ENCODE measurements at regions of chr1 and their contacts with region 1.

Region 1: GRCh38 chr1:36624466-36624865 is 141.8 kb upstream of the CSF3R start:
- DNase-seq: no peak
- ATAC-seq: no peak
- H3K4me3 ChIP-seq: no peak overlapping the region
- H3K27ac ChIP-seq: no peak overlapping the region
- H3K4me1 ChIP-seq: no peaks in the 10 kb centered on the region; a peak in 1 of 5 replicates
- H3K27me3 ChIP-seq: peaks cover 16 to 46% of the 10 kb centered on the region in 2 experiments; a peak in 4 of 5 replicates
- CTCF ChIP-seq: no peak
- EP300 ChIP-seq: no peak
- POLR2A ChIP-seq: no peak
- RAD21 ChIP-seq: no peak

Region 2: DNA sequence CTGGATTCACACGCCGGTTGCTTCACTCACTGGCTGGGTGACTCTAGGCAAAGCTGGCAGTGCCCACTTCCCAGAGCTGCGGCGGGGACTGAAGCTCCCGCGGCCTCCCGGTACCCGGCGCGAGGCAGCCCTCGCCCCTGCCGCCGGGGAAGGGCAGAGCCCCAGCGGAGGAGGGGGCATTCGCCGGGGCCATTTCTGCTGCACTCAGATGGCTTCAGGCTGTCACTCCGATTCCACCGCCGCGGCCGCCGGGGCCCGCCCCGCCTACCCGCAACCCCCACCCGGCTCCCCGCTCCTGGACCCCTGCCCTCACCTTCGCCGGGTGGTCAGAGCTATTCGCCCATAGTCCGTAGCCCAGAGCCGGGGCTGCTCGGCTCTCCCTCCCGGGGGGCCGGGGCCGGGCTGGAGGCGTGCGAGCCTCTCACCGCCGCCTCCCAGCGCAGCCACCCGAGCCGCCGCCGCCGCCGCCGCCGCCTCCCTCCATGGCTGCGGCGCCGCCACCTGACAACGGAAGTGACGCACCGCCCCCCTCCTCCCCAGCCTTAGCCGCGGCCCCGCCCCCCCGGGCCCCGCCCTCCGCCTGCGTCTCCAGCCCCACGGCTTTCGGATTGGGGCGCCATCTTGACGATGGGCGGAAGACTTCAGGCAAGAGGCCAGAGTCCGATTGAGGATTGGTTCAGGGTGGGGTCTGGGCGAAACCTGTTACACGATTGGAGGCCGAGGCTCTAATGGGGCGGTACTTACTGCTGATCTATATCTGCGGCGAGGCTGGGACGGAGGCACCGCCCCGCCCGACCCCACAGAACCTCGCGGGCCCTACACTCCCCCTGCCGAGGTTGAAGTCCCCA is 238.8 kb before region 1 on chr1 and contains the start of gene STK40:
- CTCF ChIA-PET with region 1: no interaction called
- POLR2A ChIA-PET with region 1: no interaction called
- in situ Hi-C with region 1: no loop called
- intact Hi-C with region 1: no loop called
- DNase-seq: peak; percentile 97 to 100 (median 98)
- ATAC-seq: peak; percentile 88
- H3K4me3 ChIP-seq: peak within 1 kb of the TSS; percentile 91
- H3K27ac ChIP-seq: peak within 1 kb of the TSS; percentile 99
- H3K4me1 ChIP-seq: peaks cover 29 to 33% of the 10 kb centered on the region in 2 experiments
- H3K27me3 ChIP-seq: no peaks in the 10 kb centered on the region
- CTCF ChIP-seq: no peak; a peak in 1 of 6 replicates
- EP300 ChIP-seq: no peak
- POLR2A ChIP-seq: no peak
- RAD21 ChIP-seq: no peak
- polyA plus RNA-seq, gene STK40: 0.69 to 1.7 TPM

Region 3: GRCh38 chr1:36636206-36636605 is 11.7 kb after region 1 on chr1:
- CTCF ChIA-PET with region 1: no interaction called
- POLR2A ChIA-PET with region 1: interaction called, 11 read pairs
- in situ Hi-C with region 1: no loop called
- intact Hi-C with region 1: no loop called
- DNase-seq: no peak
- ATAC-seq: no peak
- H3K4me3 ChIP-seq: no peak overlapping the region
- H3K27ac ChIP-seq: no peak overlapping the region
- H3K4me1 ChIP-seq: no peaks in the 10 kb centered on the region
- H3K27me3 ChIP-seq: peaks cover 9 to 45% of the 10 kb centered on the region in 2 experiments; a peak in 4 of 5 replicates
- CTCF ChIP-seq: no peak
- EP300 ChIP-seq: no peak
- POLR2A ChIP-seq: no peak
- RAD21 ChIP-seq: no peak

Region 4: DNA sequence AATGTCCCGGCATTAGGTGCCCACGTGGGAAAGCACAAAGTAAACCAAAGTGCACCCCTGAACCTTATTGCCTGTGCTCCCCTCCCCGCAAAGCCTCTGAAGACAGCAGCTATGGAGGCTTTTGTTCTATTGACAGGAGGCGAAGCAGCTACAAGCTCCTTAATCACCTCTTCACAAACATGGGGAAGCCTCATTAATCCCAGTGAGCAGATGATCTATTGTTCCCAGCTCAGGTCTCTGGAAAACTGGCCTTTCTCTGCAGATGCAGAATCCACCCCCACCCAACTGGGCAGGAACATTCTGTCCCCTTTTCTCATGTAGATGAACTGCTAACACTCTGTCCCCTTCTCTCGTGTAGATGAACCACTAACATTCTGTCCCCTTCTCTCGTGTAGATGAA is 48.7 kb after region 1 on chr1:
- CTCF ChIA-PET with region 1: no interaction called
- POLR2A ChIA-PET with region 1: no interaction called
- in situ Hi-C with region 1: no loop called
- intact Hi-C with region 1: no loop called
- DNase-seq: no peak
- ATAC-seq: no peak
- H3K4me3 ChIP-seq: no peak overlapping the region
- H3K27ac ChIP-seq: no peak overlapping the region
- H3K4me1 ChIP-seq: no peaks in the 10 kb centered on the region
- H3K27me3 ChIP-seq: peaks cover 13 to 42% of the 10 kb centered on the region in 2 experiments; a peak in 3 of 5 replicates
- CTCF ChIP-seq: no peak
- EP300 ChIP-seq: no peak
- POLR2A ChIP-seq: no peak
- RAD21 ChIP-seq: no peak

Measured in K562 (cell line).